ENCODE measurements at regions of chr4 and their contacts with region 1.

Region 1: DNA sequence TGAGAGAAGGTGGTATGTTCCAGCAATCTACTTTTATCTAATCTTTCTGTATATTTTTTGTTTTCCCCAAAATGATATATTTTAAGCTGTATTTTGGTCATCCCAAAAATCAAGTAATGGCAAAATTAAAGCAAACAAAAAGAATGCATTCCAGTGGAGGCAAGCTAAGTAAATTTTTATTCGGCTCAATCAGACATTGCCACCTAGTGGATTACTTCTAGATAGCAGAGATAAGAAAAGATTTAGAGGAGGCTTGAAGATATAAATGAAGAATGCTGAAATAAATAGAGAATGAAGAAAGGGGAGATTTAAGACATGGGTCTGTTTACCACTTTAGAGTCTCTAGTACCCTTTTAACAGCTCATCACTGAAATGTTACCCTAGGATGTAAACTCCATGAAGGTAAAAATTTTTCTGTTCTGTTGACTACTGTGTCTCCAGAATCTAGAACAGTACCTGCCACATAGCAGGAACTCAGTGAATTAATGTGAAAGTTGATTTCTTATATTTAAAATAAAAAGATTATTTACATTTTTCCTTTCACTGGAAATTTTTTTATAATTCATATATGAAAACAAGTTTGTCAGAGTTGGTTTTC is 110.9 kb upstream of the ANK2 start:
- DNase-seq: peak; percentile 31
- H3K4me3 ChIP-seq: no peak overlapping the region
- H3K27ac ChIP-seq: no peak overlapping the region
- H3K4me1 ChIP-seq: no peaks in the 10 kb centered on the region
- H3K27me3 ChIP-seq: no peaks in the 10 kb centered on the region
- CTCF ChIP-seq: peak; percentile 77 to 78

Region 2: DNA sequence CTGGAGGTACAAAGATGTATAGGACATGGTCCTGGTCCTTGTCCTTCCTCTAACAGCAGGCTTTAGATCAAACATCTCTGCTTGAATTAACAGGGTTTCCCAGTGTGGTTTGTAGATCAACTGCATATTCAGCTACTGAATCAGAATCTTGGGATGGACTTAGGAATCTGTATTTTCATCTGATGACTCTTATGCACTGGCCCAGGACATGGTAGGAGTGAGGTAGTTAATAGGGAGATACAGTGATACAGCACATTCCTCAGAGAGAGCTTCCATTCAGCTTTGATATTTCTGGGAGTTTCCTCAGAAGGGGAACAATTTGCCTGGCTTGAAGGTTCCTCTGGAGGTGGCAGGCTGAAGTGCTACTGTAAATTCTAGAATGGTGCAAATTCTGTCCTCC is 98.5 kb before region 1 on chr4:
- CTCF ChIA-PET with region 1: no interaction called
- dilution Hi-C with region 1: no loop called
- in situ Hi-C with region 1: loop called in 1 of 2 experiments (anchors 10 kb)
- intact Hi-C with region 1: no loop called
- DNase-seq: peak; percentile 11
- H3K4me3 ChIP-seq: no peak overlapping the region
- H3K27ac ChIP-seq: no peak overlapping the region
- H3K4me1 ChIP-seq: no peaks in the 10 kb centered on the region
- H3K27me3 ChIP-seq: no peaks in the 10 kb centered on the region
- CTCF ChIP-seq: no peak

Region 3: GRCh38 chr4:112853662-112854256 is 84.8 kb before region 1 on chr4:
- CTCF ChIA-PET with region 1: no interaction called
- dilution Hi-C with region 1: no loop called
- in situ Hi-C with region 1: loop called (anchors 5 to 10 kb)
- intact Hi-C with region 1: loop called (anchors 1 kb)
- DNase-seq: no peak
- H3K4me3 ChIP-seq: no peak overlapping the region
- H3K27ac ChIP-seq: no peak overlapping the region
- H3K4me1 ChIP-seq: peaks cover 20% of the 10 kb centered on the region
- H3K27me3 ChIP-seq: no peaks in the 10 kb centered on the region
- CTCF ChIP-seq: peak; percentile 43 to 62

Region 4: GRCh38 chr4:112927544-112927943 is 11.0 kb before region 1 on chr4:
- CTCF ChIA-PET with region 1: no interaction called
- dilution Hi-C with region 1: no loop called
- in situ Hi-C with region 1: no loop called
- intact Hi-C with region 1: no loop called
- DNase-seq: no peak
- H3K4me3 ChIP-seq: no peak overlapping the region
- H3K27ac ChIP-seq: no peak overlapping the region
- H3K4me1 ChIP-seq: no peaks in the 10 kb centered on the region
- H3K27me3 ChIP-seq: no peaks in the 10 kb centered on the region
- CTCF ChIP-seq: no peak

Measured in mammary epithelial cell (primary cell).